PC-9 (cell line): ENCODE measurements at regions of chr16 and their contacts with region 1.

Region 1: GRCh38 chr16:19227643-19228042 is 57.9 kb upstream of the CLEC19A start:
- DNase-seq: no peak
- H3K4me3 ChIP-seq: no peak overlapping the region
- H3K27ac ChIP-seq: no peak overlapping the region
- H3K4me1 ChIP-seq: peaks cover 5% of the 10 kb centered on the region
- H3K27me3 ChIP-seq: no peaks in the 10 kb centered on the region
- CTCF ChIP-seq: no peak

Region 2: DNA sequence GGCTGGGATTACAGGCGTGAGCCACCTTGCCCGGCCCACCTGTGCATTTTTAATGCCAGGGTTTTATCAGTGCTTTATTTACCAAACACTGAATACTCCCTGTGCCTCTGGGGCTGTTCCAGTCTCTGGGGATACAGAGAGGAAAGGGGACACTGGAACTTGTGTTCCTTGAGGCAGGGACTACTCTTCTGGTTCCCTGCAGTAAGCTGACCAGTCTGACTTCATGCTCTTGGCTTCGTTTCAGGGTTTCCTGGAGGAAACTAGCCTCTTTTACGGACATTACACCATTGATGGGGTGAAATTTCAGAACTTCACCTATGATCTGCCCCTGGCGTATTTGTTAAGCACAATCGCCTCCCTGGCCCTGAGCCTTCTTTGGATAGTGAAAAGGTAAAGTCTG is 197.7 kb before region 1 on chr16:
- CTCF ChIA-PET with region 1: interaction called, 14 read pairs
- POLR2A ChIA-PET with region 1: no interaction called
- intact Hi-C with region 1: no loop called
- DNase-seq: no peak
- H3K4me3 ChIP-seq: no peak overlapping the region
- H3K27ac ChIP-seq: no peak overlapping the region
- H3K4me1 ChIP-seq: peaks cover 10% of the 10 kb centered on the region
- H3K27me3 ChIP-seq: no peaks in the 10 kb centered on the region
- CTCF ChIP-seq: no peak

Region 3: GRCh38 chr16:19153876-19154275 is 73.8 kb before region 1 on chr16:
- CTCF ChIA-PET with region 1: no interaction called
- POLR2A ChIA-PET with region 1: no interaction called
- intact Hi-C with region 1: no loop called
- DNase-seq: no peak
- H3K4me3 ChIP-seq: peak overlapping the region; percentile 34; the same call in 1 of the 2 replicates
- H3K27ac ChIP-seq: no peak overlapping the region
- H3K4me1 ChIP-seq: no peaks in the 10 kb centered on the region
- H3K27me3 ChIP-seq: no peaks in the 10 kb centered on the region; the same call in 1 of the 2 replicates
- CTCF ChIP-seq: no peak